MCF 10A (cell line): ENCODE measurements at regions of chr3 and their contacts with region 1.

Region 1: DNA sequence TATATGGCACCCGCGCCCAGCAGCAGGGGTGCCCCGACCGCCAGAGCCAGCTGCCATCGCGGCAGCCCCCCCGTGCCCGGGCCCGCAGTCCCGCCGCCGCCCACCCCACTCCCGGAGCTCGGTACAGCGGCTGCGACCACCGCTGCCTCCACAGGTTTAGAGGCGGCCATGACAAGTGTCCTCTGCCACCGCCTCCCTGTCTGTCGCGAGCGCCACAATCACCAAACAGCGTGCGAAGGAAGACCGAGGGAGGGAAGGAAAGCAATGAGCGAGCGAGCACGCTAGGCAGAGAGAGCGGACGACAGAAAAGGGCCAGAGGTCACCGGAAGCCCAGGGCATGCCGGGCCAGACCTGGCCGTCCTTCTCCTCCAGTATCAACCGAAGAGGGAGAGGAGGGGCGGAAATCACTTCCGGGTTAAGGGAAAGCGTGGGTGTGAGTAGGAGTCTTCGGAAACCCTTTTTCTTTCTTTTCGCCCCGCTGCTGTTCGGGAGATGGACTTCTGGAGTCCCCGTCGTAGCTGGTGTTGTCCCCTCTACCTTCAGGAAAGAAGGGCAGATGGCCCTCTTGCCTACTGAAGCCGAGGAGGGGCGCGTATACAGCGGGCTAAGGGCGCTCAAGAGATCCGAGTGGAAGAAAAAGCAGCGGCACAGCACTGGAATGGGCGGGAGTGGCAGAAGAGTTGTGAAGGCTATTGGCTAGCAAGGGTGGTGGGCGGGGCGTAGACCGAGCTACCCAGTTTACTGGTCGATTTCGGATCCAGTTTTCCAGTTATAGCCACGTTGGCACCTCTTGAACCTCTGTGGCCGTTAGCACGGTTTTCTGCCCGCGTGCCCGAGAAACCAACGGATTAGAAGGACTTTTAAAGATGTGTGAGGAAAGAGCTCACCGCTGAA is at the starts of genes LNP1 and TOMM70:
- DNase-seq: peak; percentile 98
- H3K4me3 Mint-ChIP-seq: peak within 1 kb of the TSS; percentile 98
- H3K27ac Mint-ChIP-seq: peak within 1 kb of the TSS; percentile 97
- H3K4me1 Mint-ChIP-seq: peaks cover 31% of the 10 kb centered on the region
- H3K27me3 Mint-ChIP-seq: no peaks in the 10 kb centered on the region
- CTCF ChIP-seq: no peak
- total RNA-seq, gene LNP1: 1.2 and 1.7 TPM in 2 replicates
- total RNA-seq, gene TOMM70: 55.1 and 58.2 TPM in 2 replicates

Region 2: GRCh38 chr3:99875929-99876841 is 524.8 kb before region 1 on chr3:
- CTCF ChIA-PET with region 1: no interaction called
- POLR2A ChIA-PET with region 1: no interaction called
- intact Hi-C with region 1: no loop called
- DNase-seq: peak; percentile 30
- H3K4me3 Mint-ChIP-seq: peak overlapping the region; percentile 70
- H3K27ac Mint-ChIP-seq: no peak overlapping the region
- H3K4me1 Mint-ChIP-seq: peaks cover 8% of the 10 kb centered on the region
- H3K27me3 Mint-ChIP-seq: no peaks in the 10 kb centered on the region
- CTCF ChIP-seq: no peak

Region 3: GRCh38 chr3:100125161-100125938 is 275.7 kb before region 1 on chr3:
- CTCF ChIA-PET with region 1: no interaction called
- POLR2A ChIA-PET with region 1: no interaction called
- intact Hi-C with region 1: no loop called
- DNase-seq: peak; percentile 15
- H3K4me3 Mint-ChIP-seq: no peak overlapping the region
- H3K27ac Mint-ChIP-seq: no peak overlapping the region
- H3K4me1 Mint-ChIP-seq: peaks cover 11% of the 10 kb centered on the region
- H3K27me3 Mint-ChIP-seq: no peaks in the 10 kb centered on the region
- CTCF ChIP-seq: no peak

Region 4: DNA sequence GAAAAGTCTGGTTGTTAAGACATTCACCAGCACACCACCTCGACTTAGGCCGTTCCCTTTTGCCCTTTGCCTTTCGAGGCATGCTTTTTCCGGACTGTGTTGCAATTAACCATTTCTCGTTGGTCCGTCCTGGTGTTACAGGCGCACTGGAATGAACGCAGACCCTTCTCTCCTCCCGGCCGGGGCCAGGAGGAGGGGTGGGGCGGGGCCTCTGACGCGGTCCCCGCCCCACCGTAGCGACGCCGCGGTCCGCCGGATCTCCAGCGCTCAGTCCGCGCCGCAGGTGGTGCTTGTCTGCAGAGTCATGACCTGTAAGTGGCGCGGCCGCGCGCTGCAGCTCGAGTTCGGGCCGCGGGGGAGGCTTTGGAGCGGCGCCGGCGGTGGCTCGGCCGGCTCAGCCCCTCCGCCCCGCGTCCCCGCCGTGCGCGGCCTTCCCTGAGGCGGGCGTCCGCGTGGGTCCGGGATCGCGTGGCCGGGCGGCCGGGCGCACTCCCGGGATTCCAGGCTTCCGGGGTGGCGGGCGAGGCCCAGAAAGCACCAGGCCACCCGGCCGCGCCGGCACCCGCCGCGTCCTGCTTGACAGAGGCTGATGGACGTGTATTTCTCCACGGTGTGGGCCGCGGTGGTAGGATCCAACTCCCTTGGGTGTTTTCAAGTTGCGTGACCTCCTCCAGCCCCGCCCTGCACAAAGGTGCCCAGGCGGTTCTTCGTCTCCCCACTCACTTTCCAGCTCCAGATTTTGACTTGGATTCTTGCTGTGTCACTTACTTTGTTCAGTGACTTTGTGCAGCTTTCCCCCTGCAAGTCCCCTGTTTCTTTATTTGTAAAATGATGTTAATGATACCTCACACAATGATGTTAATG is 66.3 kb before region 1 on chr3 and contains the start of gene NIT2:
- CTCF ChIA-PET with region 1: interaction called, 3 read pairs
- POLR2A ChIA-PET with region 1: interaction called, 27 read pairs
- intact Hi-C with region 1: no loop called
- DNase-seq: peak; percentile 82
- H3K4me3 Mint-ChIP-seq: peak within 1 kb of the TSS; percentile 85
- H3K27ac Mint-ChIP-seq: peak within 1 kb of the TSS; percentile 82
- H3K4me1 Mint-ChIP-seq: peaks cover 5% of the 10 kb centered on the region
- H3K27me3 Mint-ChIP-seq: no peaks in the 10 kb centered on the region
- CTCF ChIP-seq: no peak
- total RNA-seq, gene NIT2: 37.0 and 42.6 TPM in 2 replicates

Region 5: GRCh38 chr3:100386437-100387074 is 14.5 kb before region 1 on chr3:
- CTCF ChIA-PET with region 1: interaction called, 4 read pairs
- POLR2A ChIA-PET with region 1: interaction called, 66 read pairs
- intact Hi-C with region 1: no loop called
- DNase-seq: no peak
- H3K4me3 Mint-ChIP-seq: no peak overlapping the region
- H3K27ac Mint-ChIP-seq: peak overlapping the region; percentile 70
- H3K4me1 Mint-ChIP-seq: peaks cover 6% of the 10 kb centered on the region
- H3K27me3 Mint-ChIP-seq: no peaks in the 10 kb centered on the region
- CTCF ChIP-seq: no peak

Region 6: DNA sequence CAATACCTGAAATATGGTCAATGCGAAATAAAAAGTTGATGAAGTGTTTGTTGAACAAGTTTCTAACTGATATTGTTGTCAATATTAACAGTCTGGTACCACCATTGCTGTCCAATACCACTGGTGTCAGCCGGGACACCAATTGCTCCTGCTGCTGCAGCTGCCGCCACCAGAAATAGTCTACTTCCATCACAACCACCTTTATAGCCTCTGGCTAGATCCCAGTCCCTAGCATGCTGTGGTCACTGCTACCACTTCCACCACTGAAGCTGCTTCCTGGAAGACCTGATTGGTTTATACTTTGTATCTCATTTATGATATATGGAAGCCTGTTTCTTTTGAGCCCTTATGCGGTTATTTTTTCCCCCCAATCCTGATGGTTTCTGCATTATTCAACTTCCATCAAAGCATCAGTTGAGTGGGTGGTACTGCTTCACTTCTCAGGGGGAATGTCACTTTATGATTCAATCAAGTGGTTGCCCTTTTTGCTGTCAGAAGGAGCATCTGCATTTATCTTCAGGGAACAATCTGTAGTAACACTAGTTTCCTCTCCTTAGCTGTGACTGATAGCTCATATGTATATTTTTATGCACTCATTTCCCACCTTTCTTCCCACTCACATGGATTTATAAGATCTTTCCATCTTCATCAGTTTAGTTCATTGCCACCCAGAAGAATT is 12.0 kb after region 1 on chr3:
- CTCF ChIA-PET with region 1: no interaction called
- POLR2A ChIA-PET with region 1: interaction called, 21 read pairs
- intact Hi-C with region 1: no loop called
- DNase-seq: no peak
- H3K4me3 Mint-ChIP-seq: no peak overlapping the region
- H3K27ac Mint-ChIP-seq: no peak overlapping the region
- H3K4me1 Mint-ChIP-seq: no peaks in the 10 kb centered on the region
- H3K27me3 Mint-ChIP-seq: no peaks in the 10 kb centered on the region
- CTCF ChIP-seq: no peak

Region 7: GRCh38 chr3:100425316-100425715 is 24.3 kb after region 1 on chr3:
- CTCF ChIA-PET with region 1: interaction called, 3 read pairs
- POLR2A ChIA-PET with region 1: interaction called, 16 read pairs
- intact Hi-C with region 1: no loop called
- DNase-seq: peak; percentile 58
- H3K4me3 Mint-ChIP-seq: no peak overlapping the region
- H3K27ac Mint-ChIP-seq: no peak overlapping the region
- H3K4me1 Mint-ChIP-seq: peaks cover 4% of the 10 kb centered on the region
- H3K27me3 Mint-ChIP-seq: no peaks in the 10 kb centered on the region
- CTCF ChIP-seq: no peak